ENCODE measurements at regions of chr6 and their contacts with region 1.

Region 1: DNA sequence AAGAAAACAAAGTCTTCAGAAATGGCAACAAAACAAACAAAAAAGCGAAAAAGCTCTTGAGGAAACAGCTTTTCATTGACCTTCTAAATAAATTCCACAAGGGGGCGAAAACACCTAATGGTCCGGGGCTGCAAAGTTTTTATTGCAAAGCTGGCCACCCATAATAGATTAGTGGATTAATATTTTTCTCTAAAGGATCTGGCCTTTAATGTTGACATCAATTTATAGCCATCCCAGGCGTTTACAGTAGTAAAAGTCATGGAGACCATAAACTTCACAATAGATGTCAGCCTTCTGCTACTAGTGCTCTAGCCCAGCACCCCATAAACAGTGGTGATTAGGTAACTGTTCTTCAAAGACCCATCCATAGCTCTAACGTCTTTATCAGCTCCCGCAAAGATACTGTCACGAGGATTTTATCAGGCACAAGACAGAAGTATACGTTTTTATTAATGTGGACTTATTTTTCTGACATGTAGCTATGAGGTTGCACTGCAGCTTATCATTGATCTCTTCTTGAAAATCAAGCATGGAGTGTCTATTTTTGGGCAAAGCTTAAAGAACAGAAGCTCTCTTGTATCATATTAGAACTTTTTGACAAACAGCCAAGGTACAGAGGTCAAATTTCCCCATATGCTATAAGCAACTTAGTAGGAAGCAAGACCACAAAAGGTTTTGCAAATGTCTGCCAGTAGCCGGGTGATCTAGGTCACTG is 4.7 kb downstream of the CITED2 start:
- DNase-seq: no peak
- ATAC-seq: no peak
- H3K4me3 ChIP-seq: no peak overlapping the region
- H3K27ac ChIP-seq: no peak overlapping the region
- H3K4me1 ChIP-seq: 0 out of 2 replicates have a peak, but pooled peaks cover 2% of the 10 kb centered on the region
- H3K27me3 ChIP-seq: no peaks in the 10 kb centered on the region
- CTCF ChIP-seq: peak; percentile 43 to 74 (median 60); a peak in 5 of 6 replicates
- EP300 ChIP-seq: no peak
- POLR2A ChIP-seq: no peak
- RAD21 ChIP-seq: peak; percentile 95

Region 2: DNA sequence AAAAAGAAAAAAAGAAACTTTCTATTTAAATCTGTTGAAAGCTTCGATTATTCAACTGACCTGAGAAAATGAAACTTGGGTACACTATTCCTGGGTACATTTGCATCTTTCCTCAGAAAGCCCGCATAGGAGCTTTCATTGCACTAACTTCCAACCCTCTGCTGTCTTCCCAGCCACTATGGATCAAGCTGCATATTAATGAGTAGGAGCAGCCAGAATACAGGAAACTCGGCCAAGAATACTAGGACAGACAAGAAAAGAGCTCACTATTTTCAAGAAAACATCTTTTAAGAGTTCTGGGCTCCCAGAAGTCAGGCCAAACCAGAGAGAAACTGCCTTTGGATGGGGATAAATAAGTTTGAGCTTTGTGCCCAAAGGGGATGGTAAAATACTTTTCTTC is 731.1 kb before region 1 on chr6:
- CTCF ChIA-PET with region 1: no interaction called
- POLR2A ChIA-PET with region 1: no interaction called
- RAD21 ChIA-PET with region 1: no interaction called
- SMC1A ChIA-PET with region 1: no interaction called
- in situ Hi-C with region 1: no loop called
- intact Hi-C with region 1: no loop called
- DNase-seq: no peak
- ATAC-seq: no peak; the same call in 1 of the 3 replicates
- H3K4me3 ChIP-seq: peak overlapping the region; percentile 52; the same call in 1 of the 2 replicates
- H3K27ac ChIP-seq: no peak overlapping the region
- H3K4me1 ChIP-seq: no peaks in the 10 kb centered on the region
- H3K27me3 ChIP-seq: no peaks in the 10 kb centered on the region
- CTCF ChIP-seq: no peak
- EP300 ChIP-seq: no peak
- POLR2A ChIP-seq: no peak
- RAD21 ChIP-seq: no peak

Region 3: DNA sequence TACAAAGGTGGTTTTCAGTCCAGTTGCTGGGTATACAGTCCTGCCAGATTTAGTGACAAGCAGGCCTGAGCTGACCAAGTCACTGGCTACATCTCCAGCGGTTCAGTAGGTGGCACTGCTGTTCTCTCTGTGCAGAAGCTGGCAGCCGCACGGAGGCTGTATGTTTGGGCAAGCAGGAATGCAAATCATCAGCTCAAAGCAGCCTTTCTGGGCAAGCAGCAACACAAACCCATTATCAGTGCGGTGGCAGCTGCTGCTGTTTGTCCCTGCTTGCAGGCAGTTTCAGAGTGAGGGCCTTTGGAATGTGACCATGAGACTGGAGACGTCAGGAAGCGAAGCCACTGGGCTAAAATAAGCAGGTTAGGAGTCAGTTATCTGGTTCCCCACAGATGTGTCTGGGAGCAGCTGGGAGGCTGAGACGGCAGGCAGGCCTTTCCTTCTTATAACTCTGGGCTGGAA is 150.4 kb before region 1 on chr6:
- CTCF ChIA-PET with region 1: interaction called, 254 read pairs
- POLR2A ChIA-PET with region 1: interaction called, 8 read pairs
- RAD21 ChIA-PET with region 1: interaction called, 245 read pairs
- SMC1A ChIA-PET with region 1: interaction called, 236 read pairs
- in situ Hi-C with region 1: no loop called
- intact Hi-C with region 1: loop called (anchors 1 kb)
- DNase-seq: peak; percentile 82
- ATAC-seq: peak; percentile 100
- H3K4me3 ChIP-seq: no peak overlapping the region
- H3K27ac ChIP-seq: peak overlapping the region; percentile 20; the same call in 1 of the 2 replicates
- H3K4me1 ChIP-seq: peaks cover 3% of the 10 kb centered on the region; the same call in 1 of the 2 replicates
- H3K27me3 ChIP-seq: no peaks in the 10 kb centered on the region
- CTCF ChIP-seq: peak; percentile 88 to 99 (median 93); a peak in 5 of 6 replicates
- EP300 ChIP-seq: peak in 1 of 2 experiments; percentile 25; a peak in 1 of 4 replicates
- POLR2A ChIP-seq: peak; percentile 44; the same call in 1 of the 2 replicates
- RAD21 ChIP-seq: peak; percentile 99

Region 4: GRCh38 chr6:139291813-139292619 is 77.7 kb before region 1 on chr6 and contains the start of gene TXLNB:
- CTCF ChIA-PET with region 1: interaction called, 19 read pairs
- POLR2A ChIA-PET with region 1: interaction called, 6 read pairs
- RAD21 ChIA-PET with region 1: interaction called, 29 read pairs
- SMC1A ChIA-PET with region 1: interaction called, 27 read pairs
- in situ Hi-C with region 1: no loop called
- intact Hi-C with region 1: loop called (anchors 1 kb)
- DNase-seq: peak; percentile 83
- ATAC-seq: peak; percentile 88
- H3K4me3 ChIP-seq: peak within 1 kb of the TSS; percentile 40
- H3K27ac ChIP-seq: peak within 1 kb of the TSS; percentile 88
- H3K4me1 ChIP-seq: peaks cover 35% of the 10 kb centered on the region
- H3K27me3 ChIP-seq: no peaks in the 10 kb centered on the region
- CTCF ChIP-seq: no peak
- EP300 ChIP-seq: peak; percentile 46 to 81; a peak in 2 of 4 replicates
- POLR2A ChIP-seq: 0 out of 2 replicates have a peak, but pooled peaks have one; percentile 51
- RAD21 ChIP-seq: no peak; the same call in 1 of the 2 replicates
- polyA plus RNA-seq, gene TXLNB: 0.07 to 0.10 TPM

Region 5: GRCh38 chr6:139764498-139764986 is 394.8 kb after region 1 on chr6:
- CTCF ChIA-PET with region 1: interaction called, 6 read pairs
- POLR2A ChIA-PET with region 1: interaction called, 5 read pairs
- RAD21 ChIA-PET with region 1: interaction called, 6 read pairs
- SMC1A ChIA-PET with region 1: interaction called, 13 read pairs
- in situ Hi-C with region 1: no loop called
- intact Hi-C with region 1: loop called (anchors 2 kb)
- DNase-seq: peak; percentile 66
- ATAC-seq: peak; percentile 84
- H3K4me3 ChIP-seq: no peak overlapping the region
- H3K27ac ChIP-seq: peak overlapping the region; percentile 35
- H3K4me1 ChIP-seq: peaks cover 9% of the 10 kb centered on the region; the same call in 1 of the 2 replicates
- H3K27me3 ChIP-seq: no peaks in the 10 kb centered on the region
- CTCF ChIP-seq: no peak
- EP300 ChIP-seq: peak in 1 of 2 experiments; percentile 41; a peak in 1 of 4 replicates
- POLR2A ChIP-seq: no peak
- RAD21 ChIP-seq: no peak

Region 6: GRCh38 chr6:139927236-139927635 is 557.5 kb after region 1 on chr6:
- CTCF ChIA-PET with region 1: interaction called, 22 read pairs
- POLR2A ChIA-PET with region 1: no interaction called
- RAD21 ChIA-PET with region 1: interaction called, 22 read pairs
- SMC1A ChIA-PET with region 1: interaction called, 20 read pairs
- in situ Hi-C with region 1: loop called (anchors 5 kb)
- intact Hi-C with region 1: loop called (anchors 2 kb)
- DNase-seq: no peak
- ATAC-seq: 0 out of 3 replicates have a peak, but pooled peaks have one; percentile 27
- H3K4me3 ChIP-seq: no peak overlapping the region
- H3K27ac ChIP-seq: no peak overlapping the region
- H3K4me1 ChIP-seq: no peaks in the 10 kb centered on the region
- H3K27me3 ChIP-seq: no peaks in the 10 kb centered on the region
- CTCF ChIP-seq: peak; percentile 28 to 48 (median 31); a peak in 4 of 6 replicates
- EP300 ChIP-seq: no peak
- POLR2A ChIP-seq: no peak
- RAD21 ChIP-seq: peak; percentile 62

Region 7: GRCh38 chr6:140441256-140441655 is 1071.5 kb after region 1 on chr6:
- CTCF ChIA-PET with region 1: interaction called, 8 read pairs
- POLR2A ChIA-PET with region 1: interaction called, 3 read pairs
- RAD21 ChIA-PET with region 1: interaction called, 16 read pairs
- SMC1A ChIA-PET with region 1: interaction called, 17 read pairs
- in situ Hi-C with region 1: no loop called
- intact Hi-C with region 1: loop called (anchors 2 kb)
- DNase-seq: no peak
- ATAC-seq: peak; percentile 52; the same call in 2 of the 3 replicates
- H3K4me3 ChIP-seq: no peak overlapping the region
- H3K27ac ChIP-seq: no peak overlapping the region
- H3K4me1 ChIP-seq: no peaks in the 10 kb centered on the region
- H3K27me3 ChIP-seq: no peaks in the 10 kb centered on the region
- CTCF ChIP-seq: peak in 2 of 3 experiments; percentile 15 to 36; a peak in 2 of 6 replicates
- EP300 ChIP-seq: no peak
- POLR2A ChIP-seq: no peak
- RAD21 ChIP-seq: peak; percentile 76

Measured in GM12878 (cell line).